ENCODE measurements at regions of chr7 and their contacts with region 1.

Region 1: GRCh38 chr7:22387583-22387982 is 30.6 kb upstream of the RAPGEF5 start:
- DNase-seq: no peak
- H3K4me3 ChIP-seq: no peak overlapping the region
- H3K27ac ChIP-seq: no peak overlapping the region
- H3K4me1 ChIP-seq: no peaks in the 10 kb centered on the region
- H3K27me3 ChIP-seq: no peaks in the 10 kb centered on the region
- CTCF ChIP-seq: no peak
- POLR2A ChIP-seq: no peak

Region 2: DNA sequence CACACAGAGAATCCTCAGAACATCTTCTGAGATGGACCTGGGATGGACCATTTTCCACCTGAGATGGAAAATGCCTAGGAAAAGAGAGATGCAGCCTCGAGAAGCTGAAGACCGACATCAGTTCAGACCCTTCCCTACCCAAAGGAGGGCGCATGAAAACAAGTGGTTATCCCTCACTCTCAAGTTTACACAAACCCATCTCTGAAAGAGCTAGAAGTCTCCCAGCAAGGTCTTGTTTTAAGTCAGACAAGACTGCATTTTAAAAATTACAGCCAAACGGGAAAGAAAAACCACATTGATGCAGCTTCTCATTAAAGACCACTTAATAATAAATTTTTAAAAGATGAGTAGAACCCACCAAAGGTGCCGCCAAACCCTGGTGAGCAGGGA is 32.0 kb before region 1 on chr7:
- intact Hi-C with region 1: loop called (anchors 2 kb)
- DNase-seq: no peak
- H3K4me3 ChIP-seq: peak overlapping the region in 1 of 2 donors; percentile 49
- H3K27ac ChIP-seq: no peak overlapping the region
- H3K4me1 ChIP-seq: peaks cover 18% of the 10 kb centered on the region
- H3K27me3 ChIP-seq: no peaks in the 10 kb centered on the region
- CTCF ChIP-seq: no peak
- POLR2A ChIP-seq: no peak

Measured in vagina (tissue), 2 donors.